Calu3 (cell line): ENCODE measurements at regions of chr6 and their contacts with region 1.

Region 1: GRCh38 chr6:106731144-106731842 is 101.9 kb downstream of the QRSL1 start:
- DNase-seq: peak; percentile 66
- H3K4me3 Mint-ChIP-seq: peak overlapping the region; percentile 6
- H3K27ac Mint-ChIP-seq: peak overlapping the region; percentile 79
- H3K4me1 Mint-ChIP-seq: peaks cover 72% of the 10 kb centered on the region
- H3K27me3 Mint-ChIP-seq: no peaks in the 10 kb centered on the region
- CTCF ChIP-seq: no peak

Region 2: DNA sequence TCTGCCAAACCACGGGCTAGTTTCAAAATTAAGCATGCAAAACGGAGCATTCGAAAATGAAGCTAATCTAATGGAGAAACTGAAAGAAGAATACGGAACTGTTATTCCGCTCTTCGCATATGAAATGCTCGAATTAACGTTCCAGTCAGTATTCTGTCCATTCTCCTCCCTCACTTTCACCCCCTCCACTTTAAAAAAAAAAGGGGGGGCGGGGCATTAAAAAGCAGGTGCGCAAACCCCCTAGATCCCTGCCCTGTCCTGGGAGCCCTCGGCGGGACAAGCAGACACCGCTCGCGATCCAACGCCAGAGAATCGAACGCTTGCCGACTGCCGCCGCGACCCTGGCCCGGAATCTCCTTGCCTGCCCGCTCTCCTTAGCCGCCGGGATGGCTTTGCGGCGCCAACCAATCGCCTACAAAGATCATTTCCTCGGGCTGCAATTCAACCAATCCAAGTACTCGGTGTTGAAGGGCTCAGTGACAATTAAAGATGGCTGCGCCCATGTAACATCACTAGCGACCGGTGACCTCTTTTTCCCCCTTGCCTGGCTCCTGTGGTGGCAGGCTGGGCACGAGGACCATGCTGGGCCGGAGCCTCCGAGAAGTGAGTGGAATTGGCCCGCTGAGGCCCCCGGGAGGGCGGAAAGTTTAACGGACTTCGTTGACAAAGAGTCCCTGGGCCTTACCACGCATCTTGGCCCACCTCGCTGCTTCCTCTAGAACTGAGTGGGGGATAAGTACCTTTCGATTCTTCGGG is 102.0 kb before region 1 on chr6 and contains the starts of genes QRSL1 and RTN4IP1:
- CTCF ChIA-PET with region 1: no interaction called
- intact Hi-C with region 1: loop called (anchors 5 kb)
- DNase-seq: peak; percentile 85
- H3K4me3 Mint-ChIP-seq: peak within 1 kb of the TSS; percentile 70
- H3K27ac Mint-ChIP-seq: peak within 1 kb of the TSS; percentile 60
- H3K4me1 Mint-ChIP-seq: peaks cover 9% of the 10 kb centered on the region
- H3K27me3 Mint-ChIP-seq: no peaks in the 10 kb centered on the region
- CTCF ChIP-seq: no peak
- total RNA-seq, gene QRSL1: 21.8 and 27.7 TPM in 2 replicates
- total RNA-seq, gene RTN4IP1: 15.2 and 18.8 TPM in 2 replicates

Region 3: GRCh38 chr6:106692112-106692818 is 39.0 kb before region 1 on chr6:
- CTCF ChIA-PET with region 1: no interaction called
- intact Hi-C with region 1: loop called (anchors 2 kb)
- DNase-seq: peak; percentile 69
- H3K4me3 Mint-ChIP-seq: no peak overlapping the region
- H3K27ac Mint-ChIP-seq: peak overlapping the region; percentile 64
- H3K4me1 Mint-ChIP-seq: peaks cover 27% of the 10 kb centered on the region
- H3K27me3 Mint-ChIP-seq: no peaks in the 10 kb centered on the region
- CTCF ChIP-seq: no peak

Region 4: GRCh38 chr6:106746660-106747059 is 15.4 kb after region 1 on chr6:
- CTCF ChIA-PET with region 1: interaction called, 4 read pairs
- intact Hi-C with region 1: loop called (anchors 2 kb)
- DNase-seq: peak; percentile 59
- H3K4me3 Mint-ChIP-seq: peak overlapping the region; percentile 27
- H3K27ac Mint-ChIP-seq: peak overlapping the region; percentile 89
- H3K4me1 Mint-ChIP-seq: peaks cover 88% of the 10 kb centered on the region
- H3K27me3 Mint-ChIP-seq: no peaks in the 10 kb centered on the region
- CTCF ChIP-seq: no peak

Region 5: GRCh38 chr6:106787327-106788196 is 56.3 kb after region 1 on chr6:
- CTCF ChIA-PET with region 1: no interaction called
- intact Hi-C with region 1: loop called (anchors 5 kb)
- DNase-seq: peak; percentile 66
- H3K4me3 Mint-ChIP-seq: peak overlapping the region; percentile 74
- H3K27ac Mint-ChIP-seq: peak overlapping the region; percentile 95
- H3K4me1 Mint-ChIP-seq: peaks cover 84% of the 10 kb centered on the region
- H3K27me3 Mint-ChIP-seq: no peaks in the 10 kb centered on the region
- CTCF ChIP-seq: no peak

Region 6: DNA sequence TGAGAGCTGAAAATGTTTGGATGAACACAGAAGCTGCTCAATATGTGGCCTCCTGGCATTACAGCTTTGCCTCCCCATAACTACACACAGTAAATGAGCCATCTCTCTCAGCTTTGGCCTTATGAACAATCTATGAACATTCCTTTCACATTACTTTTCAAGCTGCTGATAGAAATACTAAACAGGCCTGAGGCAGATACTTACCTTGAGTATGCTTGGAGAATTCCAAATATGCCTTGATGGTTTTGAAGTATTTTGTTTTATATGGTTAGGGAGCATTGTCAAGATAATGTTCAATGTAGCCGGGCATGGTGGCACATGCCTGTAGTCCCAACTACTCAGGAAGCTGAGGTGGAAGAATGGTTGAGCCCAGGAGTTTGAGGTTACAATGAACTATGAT is 138.8 kb after region 1 on chr6:
- CTCF ChIA-PET with region 1: no interaction called
- intact Hi-C with region 1: loop called (anchors 5 kb)
- DNase-seq: peak; percentile 47
- H3K4me3 Mint-ChIP-seq: no peak overlapping the region
- H3K27ac Mint-ChIP-seq: peak overlapping the region; percentile 68
- H3K4me1 Mint-ChIP-seq: peaks cover 52% of the 10 kb centered on the region
- H3K27me3 Mint-ChIP-seq: no peaks in the 10 kb centered on the region
- CTCF ChIP-seq: no peak

Region 7: DNA sequence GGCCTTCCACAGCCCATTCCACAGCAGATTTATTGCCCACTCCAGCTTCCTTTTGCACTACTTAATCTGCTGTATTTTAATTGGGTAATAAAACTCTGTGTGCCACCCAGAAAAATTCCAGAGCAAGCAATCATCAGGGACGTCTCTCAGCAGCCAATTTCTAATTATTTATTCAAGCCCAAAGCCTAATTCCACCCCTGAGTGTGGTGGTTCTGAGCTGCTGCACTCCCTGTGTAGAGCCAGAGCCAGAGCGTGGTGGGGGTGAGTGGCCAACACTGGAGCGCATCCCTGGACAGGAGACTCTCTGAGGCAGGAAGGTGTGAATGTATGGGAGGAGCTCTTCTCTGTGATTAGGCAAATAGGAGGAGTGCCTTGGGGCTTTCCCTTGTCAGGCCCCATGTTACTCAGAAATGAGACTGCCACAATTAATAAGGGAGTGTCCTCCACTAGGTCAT is 177.1 kb after region 1 on chr6:
- CTCF ChIA-PET with region 1: no interaction called
- intact Hi-C with region 1: no loop called
- DNase-seq: peak; percentile 22
- H3K4me3 Mint-ChIP-seq: no peak overlapping the region
- H3K27ac Mint-ChIP-seq: no peak overlapping the region
- H3K4me1 Mint-ChIP-seq: peaks cover 27% of the 10 kb centered on the region
- H3K27me3 Mint-ChIP-seq: no peaks in the 10 kb centered on the region
- CTCF ChIP-seq: no peak

Region 8: DNA sequence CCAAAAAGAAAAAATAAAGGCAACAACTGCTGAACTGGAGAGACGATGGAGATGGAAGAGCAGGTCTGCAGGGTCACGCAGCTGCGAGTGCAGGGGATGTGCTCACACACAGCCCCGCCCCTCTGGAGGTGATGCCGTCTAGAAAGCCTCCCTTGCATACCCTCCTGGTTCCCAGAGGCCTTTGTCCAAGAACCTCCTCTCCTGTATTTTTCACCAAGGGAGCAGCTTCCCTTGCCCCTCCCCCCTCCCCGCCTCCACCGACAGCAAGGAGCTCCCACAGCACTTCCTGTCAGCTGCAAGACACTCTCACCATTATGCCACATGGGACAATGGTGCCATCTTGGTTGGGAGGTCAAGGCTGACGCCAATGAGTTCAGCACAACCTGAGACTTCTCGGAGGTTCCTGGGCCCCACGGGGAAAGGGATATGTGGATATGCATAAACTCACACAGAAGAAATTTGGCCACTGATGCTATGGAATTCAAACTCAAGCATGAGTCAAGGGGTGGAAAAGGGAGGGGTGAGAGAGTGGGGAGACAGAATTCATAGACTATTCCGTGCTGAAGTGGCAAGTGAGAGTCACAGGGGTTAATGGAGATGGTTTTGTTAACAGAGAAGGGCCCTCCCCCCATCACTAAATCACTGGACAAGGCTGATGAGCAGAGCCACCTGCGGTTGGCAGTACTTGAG is 959.9 kb after region 1 on chr6:
- CTCF ChIA-PET with region 1: no interaction called
- intact Hi-C with region 1: no loop called
- DNase-seq: no peak
- H3K4me3 Mint-ChIP-seq: no peak overlapping the region
- H3K27ac Mint-ChIP-seq: no peak overlapping the region
- H3K4me1 Mint-ChIP-seq: no peaks in the 10 kb centered on the region
- H3K27me3 Mint-ChIP-seq: peaks cover 13% of the 10 kb centered on the region
- CTCF ChIP-seq: no peak